ENCODE measurements at regions of chr1 and their contacts with region 1.

Region 1: GRCh38 chr1:200351826-200352549 is 57.8 kb downstream of the ZNF281 start:
- DNase-seq: peak; percentile 77
- H3K4me3 Mint-ChIP-seq: peak overlapping the region; percentile 53
- H3K27ac Mint-ChIP-seq: peak overlapping the region; percentile 67
- H3K4me1 Mint-ChIP-seq: peaks cover 38% of the 10 kb centered on the region
- H3K27me3 Mint-ChIP-seq: no peaks in the 10 kb centered on the region

Region 2: DNA sequence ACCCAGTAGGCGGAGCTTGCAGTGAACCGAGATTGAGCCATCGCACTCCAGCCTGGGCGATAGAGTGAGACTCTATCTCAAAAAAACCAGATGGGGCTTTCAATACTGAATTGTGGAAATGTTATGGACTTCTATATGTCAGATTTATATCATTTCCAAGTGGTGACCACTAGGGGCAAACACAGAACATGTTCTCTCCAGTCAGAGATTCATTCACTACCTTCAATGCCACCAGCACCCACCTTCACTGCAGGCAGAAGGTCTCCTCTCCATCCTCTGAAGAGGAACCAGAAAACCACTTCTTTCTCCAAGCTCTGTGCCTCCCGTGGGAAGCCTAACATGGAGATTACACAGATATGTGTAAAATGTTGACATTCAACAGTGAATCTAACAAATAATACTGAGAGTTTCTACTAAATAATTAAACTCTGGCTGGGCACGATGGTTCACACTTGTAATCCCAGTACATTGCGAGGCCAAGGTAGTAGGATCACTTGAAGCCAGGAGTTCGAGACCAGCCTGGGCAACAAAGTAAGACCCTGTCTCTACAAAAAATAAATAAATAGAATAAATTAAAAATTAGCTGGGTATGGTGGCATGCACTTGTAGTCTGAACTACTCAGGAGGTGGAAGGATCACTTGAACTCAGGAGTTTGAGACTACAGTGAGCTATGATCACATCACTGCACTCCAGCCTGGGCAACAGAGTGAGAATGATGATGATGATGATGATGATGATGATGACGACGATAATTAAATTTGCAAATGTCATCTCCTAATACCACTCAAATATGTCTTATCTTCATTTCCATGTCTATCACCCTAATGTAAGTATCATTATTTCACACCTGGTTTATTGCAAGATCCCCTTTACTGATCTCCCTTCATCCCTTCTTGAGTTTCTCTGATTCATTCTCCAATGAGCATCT is 93.3 kb before region 1 on chr1:
- intact Hi-C with region 1: loop called (anchors 5 kb)
- DNase-seq: no peak
- H3K4me3 Mint-ChIP-seq: no peak overlapping the region
- H3K27ac Mint-ChIP-seq: no peak overlapping the region
- H3K4me1 Mint-ChIP-seq: peaks cover 11% of the 10 kb centered on the region
- H3K27me3 Mint-ChIP-seq: peaks cover 13% of the 10 kb centered on the region

Region 3: DNA sequence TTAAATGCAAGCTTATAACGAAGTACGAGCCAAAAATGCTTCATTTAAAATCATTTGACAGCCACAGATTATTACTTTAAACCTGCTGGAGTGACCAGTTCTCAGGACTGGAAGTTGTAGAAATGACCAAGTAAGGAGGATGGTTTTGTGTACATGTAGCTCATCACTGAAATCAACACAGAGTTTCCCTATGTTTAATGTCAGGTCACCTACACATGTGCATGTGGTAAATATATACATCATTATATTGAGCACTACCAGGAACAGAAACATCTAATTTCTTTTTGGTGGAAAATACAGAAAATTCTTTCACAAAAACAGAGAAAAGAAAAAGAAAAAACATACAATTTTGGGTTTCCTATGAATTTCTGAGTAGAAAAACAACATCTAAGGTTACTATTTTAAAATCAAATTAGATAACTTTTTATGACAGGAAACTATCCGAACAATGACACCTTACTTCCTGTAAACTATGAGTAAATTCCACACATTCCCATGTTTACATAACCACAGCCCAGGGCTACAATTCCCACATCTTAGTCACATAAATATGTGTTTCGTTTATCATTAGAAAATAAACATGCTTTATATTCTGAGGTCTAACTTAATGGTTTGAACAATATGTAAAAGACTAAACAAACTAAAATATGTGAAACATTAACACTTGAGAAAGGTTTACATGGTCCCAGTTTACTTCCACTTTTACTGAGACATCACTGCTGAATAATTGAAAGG is 15.7 kb before region 1 on chr1:
- intact Hi-C with region 1: loop called (anchors 2 kb)
- DNase-seq: no peak
- H3K4me3 Mint-ChIP-seq: no peak overlapping the region
- H3K27ac Mint-ChIP-seq: no peak overlapping the region
- H3K4me1 Mint-ChIP-seq: peaks cover 14% of the 10 kb centered on the region
- H3K27me3 Mint-ChIP-seq: peaks cover 2% of the 10 kb centered on the region

Region 4: DNA sequence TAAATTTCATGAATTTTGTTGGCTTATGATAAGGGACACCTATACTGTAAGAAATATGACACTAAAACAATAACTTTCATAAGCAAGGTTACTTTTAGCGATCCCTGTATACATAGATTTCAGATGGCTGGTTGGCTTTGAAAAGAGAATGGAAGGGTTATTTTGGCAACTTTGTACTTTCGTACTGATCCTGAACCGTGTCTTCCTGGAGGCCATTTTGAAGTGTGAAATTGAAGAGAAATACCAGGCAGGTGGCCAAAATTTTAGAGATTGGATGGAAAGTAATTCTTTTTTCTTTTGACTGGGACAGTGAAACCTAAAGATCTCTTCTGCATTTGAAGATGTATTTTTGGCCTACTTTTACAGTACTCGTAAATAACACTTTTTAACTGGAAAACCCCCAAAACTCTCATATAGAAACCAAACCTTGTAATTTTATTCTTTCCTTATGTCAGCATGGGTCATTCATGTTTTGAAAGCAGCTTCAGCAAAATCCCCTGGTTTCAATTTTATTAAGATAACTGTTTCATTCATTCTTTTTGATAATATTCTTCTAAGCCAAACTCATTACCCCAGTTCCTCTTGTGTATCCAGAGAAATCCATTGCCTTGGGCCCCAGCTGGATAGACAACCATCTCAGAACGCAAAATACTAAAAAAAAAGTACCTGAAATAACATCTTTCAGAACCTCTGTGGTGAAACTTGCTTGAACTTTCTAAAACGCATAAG is 96.2 kb after region 1 on chr1:
- intact Hi-C with region 1: loop called (anchors 1 kb)
- DNase-seq: no peak
- H3K4me3 Mint-ChIP-seq: peak overlapping the region; percentile 33
- H3K27ac Mint-ChIP-seq: peak overlapping the region; percentile 95
- H3K4me1 Mint-ChIP-seq: peaks cover 38% of the 10 kb centered on the region
- H3K27me3 Mint-ChIP-seq: no peaks in the 10 kb centered on the region

Region 5: GRCh38 chr1:200488375-200489165 is 136.6 kb after region 1 on chr1:
- intact Hi-C with region 1: loop called (anchors 2 kb)
- DNase-seq: peak; percentile 85
- H3K4me3 Mint-ChIP-seq: no peak overlapping the region
- H3K27ac Mint-ChIP-seq: no peak overlapping the region
- H3K4me1 Mint-ChIP-seq: peaks cover 15% of the 10 kb centered on the region
- H3K27me3 Mint-ChIP-seq: peaks cover 31% of the 10 kb centered on the region